ENCODE measurements at regions of chr11 and their contacts with region 1.

Region 1: DNA sequence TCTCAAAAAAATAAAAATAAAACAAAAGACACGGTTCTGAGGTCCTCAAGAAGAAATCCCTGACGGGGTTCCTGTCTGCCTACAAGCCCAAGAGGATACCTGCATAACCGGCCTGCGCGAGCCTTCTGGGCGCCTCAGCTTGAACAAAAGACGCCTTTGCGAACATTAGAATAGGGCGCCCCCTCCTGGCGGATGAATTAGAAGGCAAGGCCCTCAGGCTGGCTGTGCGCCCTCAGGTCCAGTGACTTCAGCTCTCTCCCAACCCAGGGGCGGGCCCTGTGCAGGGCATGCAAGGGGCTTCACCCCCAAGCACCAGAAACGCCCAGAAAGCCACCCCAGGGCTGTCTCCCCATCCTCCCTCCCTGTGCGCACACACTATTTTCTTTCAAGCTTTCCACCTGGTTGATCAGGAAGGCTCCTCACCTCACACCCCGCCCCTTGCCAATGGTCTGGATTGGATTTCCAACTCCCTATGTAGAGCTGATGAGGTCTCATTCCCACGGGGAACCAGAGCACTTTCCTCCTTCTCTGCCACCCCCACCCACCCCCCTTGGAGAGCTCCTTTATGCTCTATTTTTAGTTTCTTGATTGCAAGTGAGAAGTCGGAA is 273.3 kb downstream of the BUD13 start:
- DNase-seq: peak; percentile 98
- ATAC-seq: peak; percentile 84
- H3K4me3 Mint-ChIP-seq: 0 out of 2 replicates have a peak overlapping the region, but pooled peaks have one; percentile 18
- H3K27ac Mint-ChIP-seq: no peak overlapping the region
- H3K4me1 Mint-ChIP-seq: peaks cover 48% of the 10 kb centered on the region
- H3K27me3 Mint-ChIP-seq: peaks cover 27% of the 10 kb centered on the region
- CTCF ChIP-seq: peak; percentile 85

Region 2: DNA sequence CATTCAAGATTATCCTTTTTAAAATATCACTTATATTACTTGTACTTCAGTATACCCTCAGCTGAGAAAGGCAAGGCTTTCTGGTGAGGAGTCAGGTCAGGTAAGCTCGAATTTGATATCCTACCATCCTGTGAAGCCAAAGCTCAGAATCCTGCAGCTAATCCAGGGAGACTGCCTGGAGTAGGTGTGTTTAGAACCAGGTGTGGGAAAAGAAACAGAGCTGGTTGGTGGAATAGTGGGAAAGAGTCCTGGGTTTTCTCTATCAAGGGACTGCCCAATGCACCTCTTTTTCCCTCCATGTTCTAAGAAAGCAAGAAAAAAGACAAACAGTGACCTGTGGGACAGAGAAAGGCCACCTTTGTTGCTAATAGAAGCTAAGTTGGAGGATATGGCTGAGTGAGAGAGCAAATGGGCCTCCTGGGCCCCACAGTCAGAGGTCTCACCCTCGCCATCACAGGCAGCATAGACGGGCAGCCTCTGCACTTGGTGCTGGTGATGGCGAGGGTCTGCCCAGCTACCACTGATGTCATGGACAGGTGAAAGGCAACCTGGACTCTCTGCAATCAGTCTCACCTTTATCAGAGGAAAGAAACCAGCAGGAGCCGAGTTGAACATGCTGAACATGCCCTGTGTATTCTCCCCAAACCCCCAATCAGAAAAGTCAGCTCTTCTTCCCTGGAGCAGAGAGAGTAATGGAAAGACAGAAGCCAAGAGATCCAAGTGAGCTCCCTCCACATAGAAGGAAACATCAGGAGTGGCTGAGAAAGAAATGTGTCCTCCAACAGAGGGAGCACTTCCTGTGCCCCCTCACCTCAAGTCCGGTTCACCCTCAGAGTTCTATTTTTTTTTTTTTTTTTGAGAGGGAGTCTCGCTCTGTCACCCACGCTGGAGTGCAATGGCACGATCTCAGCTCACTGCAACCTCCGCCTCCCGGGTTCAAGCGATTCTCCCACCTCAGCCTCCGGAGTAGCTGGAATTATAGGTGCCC is 218.0 kb before region 1 on chr11:
- CTCF ChIA-PET with region 1: interaction called, 60 read pairs
- POLR2A ChIA-PET with region 1: no interaction called
- DNase-seq: no peak
- ATAC-seq: peak; percentile 66
- H3K4me3 Mint-ChIP-seq: no peak overlapping the region
- H3K27ac Mint-ChIP-seq: no peak overlapping the region
- H3K4me1 Mint-ChIP-seq: no peaks in the 10 kb centered on the region; the same call in 1 of the 2 replicates
- H3K27me3 Mint-ChIP-seq: no peaks in the 10 kb centered on the region
- CTCF ChIP-seq: no peak

Region 3: DNA sequence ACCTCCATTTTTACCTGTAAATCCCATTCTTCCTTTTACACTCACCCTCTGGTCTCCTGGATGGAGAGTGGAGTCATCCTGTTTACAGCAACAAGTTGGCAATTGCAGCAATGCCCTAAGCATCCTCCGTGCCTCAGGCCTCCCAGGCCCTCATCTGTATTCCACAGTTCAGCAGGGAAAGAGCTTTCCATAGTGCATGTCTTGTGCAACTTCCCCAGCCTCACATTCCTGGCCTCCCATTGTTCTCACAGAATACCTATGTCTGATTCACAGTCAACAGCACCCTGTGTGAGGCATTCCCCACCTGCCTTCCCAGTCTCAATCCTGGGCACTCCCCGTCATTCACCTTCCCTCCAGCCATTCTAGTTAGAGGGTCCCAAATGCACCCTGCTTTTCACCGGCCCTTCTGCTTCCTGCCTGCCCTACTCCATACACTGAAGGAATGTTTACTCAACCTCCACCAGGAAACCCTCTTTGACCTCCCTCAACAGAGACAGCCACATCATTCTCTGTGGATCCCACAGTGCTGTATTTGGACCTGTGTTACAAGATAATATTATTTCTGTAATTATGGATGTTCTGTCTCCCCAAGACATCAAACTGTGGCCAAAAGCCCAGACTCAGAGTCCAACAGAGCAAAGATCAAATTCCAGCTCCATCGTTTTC is 132.4 kb before region 1 on chr11:
- CTCF ChIA-PET with region 1: interaction called, 12 read pairs
- POLR2A ChIA-PET with region 1: no interaction called
- DNase-seq: peak; percentile 28
- ATAC-seq: peak; percentile 81
- H3K4me3 Mint-ChIP-seq: no peak overlapping the region
- H3K27ac Mint-ChIP-seq: peak overlapping the region; percentile 48
- H3K4me1 Mint-ChIP-seq: peaks cover 23% of the 10 kb centered on the region
- H3K27me3 Mint-ChIP-seq: no peaks in the 10 kb centered on the region; the same call in 1 of the 2 replicates
- CTCF ChIP-seq: no peak

Region 4: GRCh38 chr11:116445108-116446047 is 54.1 kb before region 1 on chr11:
- CTCF ChIA-PET with region 1: interaction called, 25 read pairs
- POLR2A ChIA-PET with region 1: interaction called, 3 read pairs
- DNase-seq: peak; percentile 53
- ATAC-seq: peak; percentile 94
- H3K4me3 Mint-ChIP-seq: peak overlapping the region; percentile 53
- H3K27ac Mint-ChIP-seq: peak overlapping the region; percentile 96
- H3K4me1 Mint-ChIP-seq: peaks cover 54% of the 10 kb centered on the region
- H3K27me3 Mint-ChIP-seq: peaks cover 4% of the 10 kb centered on the region
- CTCF ChIP-seq: no peak

Region 5: DNA sequence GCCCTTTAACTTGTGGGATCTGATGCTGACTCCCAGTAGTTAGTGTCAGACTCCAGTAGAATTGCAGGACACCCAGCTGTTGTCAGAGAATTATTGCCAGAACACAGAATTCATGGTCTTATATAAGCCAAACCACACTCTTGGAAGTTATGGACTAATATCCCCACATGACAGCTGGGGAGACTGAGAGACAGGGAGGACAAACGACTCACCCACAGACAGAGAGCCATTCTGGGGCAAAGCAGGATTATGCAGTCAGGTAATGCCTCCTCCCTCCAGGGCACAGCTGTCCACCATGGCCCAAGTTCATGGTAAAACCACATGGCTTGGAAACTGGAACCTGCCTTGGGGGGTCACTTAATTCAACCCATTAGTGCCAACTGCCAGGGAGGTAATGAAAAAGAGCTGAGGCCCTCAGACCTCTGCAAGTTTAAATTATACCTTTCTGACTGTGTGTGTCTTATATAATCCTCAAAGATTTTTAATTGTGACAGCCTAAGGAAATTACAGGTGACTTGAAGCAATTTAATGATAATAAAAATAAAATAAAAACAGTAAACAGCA is 26.2 kb before region 1 on chr11:
- CTCF ChIA-PET with region 1: interaction called, 18 read pairs
- POLR2A ChIA-PET with region 1: no interaction called
- DNase-seq: no peak
- ATAC-seq: no peak
- H3K4me3 Mint-ChIP-seq: no peak overlapping the region
- H3K27ac Mint-ChIP-seq: no peak overlapping the region
- H3K4me1 Mint-ChIP-seq: peaks cover 18% of the 10 kb centered on the region
- H3K27me3 Mint-ChIP-seq: peaks cover 27% of the 10 kb centered on the region
- CTCF ChIP-seq: no peak

Region 6: GRCh38 chr11:116519499-116519898 is 20.0 kb after region 1 on chr11:
- CTCF ChIA-PET with region 1: interaction called, 56 read pairs
- POLR2A ChIA-PET with region 1: no interaction called
- DNase-seq: no peak
- ATAC-seq: no peak
- H3K4me3 Mint-ChIP-seq: no peak overlapping the region
- H3K27ac Mint-ChIP-seq: no peak overlapping the region
- H3K4me1 Mint-ChIP-seq: no peaks in the 10 kb centered on the region
- H3K27me3 Mint-ChIP-seq: no peaks in the 10 kb centered on the region; the same call in 1 of the 2 replicates
- CTCF ChIP-seq: no peak

Region 7: GRCh38 chr11:116732271-116733042 is 233.0 kb after region 1 on chr11:
- CTCF ChIA-PET with region 1: interaction called, 12 read pairs
- POLR2A ChIA-PET with region 1: no interaction called
- DNase-seq: peak; percentile 85
- ATAC-seq: peak; percentile 88
- H3K4me3 Mint-ChIP-seq: peak overlapping the region; percentile 64
- H3K27ac Mint-ChIP-seq: peak overlapping the region; percentile 50; the same call in 1 of the 2 replicates
- H3K4me1 Mint-ChIP-seq: peaks cover 36% of the 10 kb centered on the region
- H3K27me3 Mint-ChIP-seq: no peaks in the 10 kb centered on the region
- CTCF ChIP-seq: peak; percentile 85